ENCODE measurements at regions of chr20 and their contacts with region 1.

Region 1: DNA sequence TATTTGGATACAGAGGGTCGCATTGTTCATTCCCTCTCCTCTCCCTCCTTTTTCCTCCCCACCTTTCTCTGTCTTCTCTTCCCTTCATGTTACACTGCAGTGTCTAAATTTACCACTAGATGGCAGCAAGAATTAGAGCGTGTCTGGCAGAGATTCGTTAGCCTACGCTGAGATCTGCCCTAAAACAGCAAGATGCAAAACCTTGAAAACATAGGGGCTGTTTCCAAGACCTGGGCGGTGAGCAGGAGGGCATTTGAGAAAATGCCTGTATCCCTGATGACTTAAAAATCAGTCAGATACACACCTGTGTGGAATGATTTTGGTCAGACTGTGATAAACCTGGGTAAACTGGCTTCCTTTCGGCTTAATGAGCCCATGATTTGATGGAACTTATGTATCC is 101.5 kb upstream of the ISM1 start:
- DNase-seq: peak; percentile 11
- H3K4me3 ChIP-seq: no peak overlapping the region
- H3K27ac ChIP-seq: no peak overlapping the region
- H3K4me1 ChIP-seq: no peaks in the 10 kb centered on the region
- H3K27me3 ChIP-seq: no peaks in the 10 kb centered on the region
- CTCF ChIP-seq: peak; percentile 82 to 90 (median 87)
- EP300 ChIP-seq: no peak
- POLR2A ChIP-seq: no peak

Region 2: DNA sequence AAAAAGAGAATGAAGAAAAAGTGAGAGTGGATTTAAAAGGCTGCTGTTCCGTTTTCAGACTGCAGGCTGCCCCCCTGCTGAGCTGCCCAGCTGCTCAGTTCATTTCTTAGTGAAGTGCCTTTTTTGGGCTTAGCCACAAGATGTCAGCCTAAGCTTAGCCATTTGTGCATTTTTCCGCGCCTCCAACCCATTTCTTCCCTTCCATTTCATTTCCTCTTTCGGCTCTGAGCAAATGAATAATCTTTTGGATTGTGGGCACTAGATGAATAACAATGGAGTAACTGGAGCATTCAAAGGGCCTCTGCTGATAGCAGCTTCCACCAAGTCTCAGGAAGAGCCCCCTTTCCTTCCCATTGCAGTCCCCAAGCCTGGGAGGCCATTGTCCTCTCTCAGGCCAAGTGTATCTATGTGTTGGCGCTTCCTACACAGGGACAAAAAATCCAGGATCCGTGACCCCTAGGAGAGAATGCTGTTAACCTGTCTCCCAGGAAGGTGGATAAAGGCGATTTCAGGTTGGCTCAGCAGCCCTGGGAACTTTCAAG is 194.3 kb before region 1 on chr20:
- in situ Hi-C with region 1: no loop called
- intact Hi-C with region 1: loop called (anchors 5 kb)
- DNase-seq: peak; percentile 44
- H3K4me3 ChIP-seq: no peak overlapping the region
- H3K27ac ChIP-seq: no peak overlapping the region
- H3K4me1 ChIP-seq: peaks cover 0 to 9% (median 0%) of the 10 kb centered on the region in 4 donors
- H3K27me3 ChIP-seq: no peaks in the 10 kb centered on the region
- CTCF ChIP-seq: peak; percentile 70 to 91 (median 73)
- EP300 ChIP-seq: no peak
- POLR2A ChIP-seq: no peak

Region 3: DNA sequence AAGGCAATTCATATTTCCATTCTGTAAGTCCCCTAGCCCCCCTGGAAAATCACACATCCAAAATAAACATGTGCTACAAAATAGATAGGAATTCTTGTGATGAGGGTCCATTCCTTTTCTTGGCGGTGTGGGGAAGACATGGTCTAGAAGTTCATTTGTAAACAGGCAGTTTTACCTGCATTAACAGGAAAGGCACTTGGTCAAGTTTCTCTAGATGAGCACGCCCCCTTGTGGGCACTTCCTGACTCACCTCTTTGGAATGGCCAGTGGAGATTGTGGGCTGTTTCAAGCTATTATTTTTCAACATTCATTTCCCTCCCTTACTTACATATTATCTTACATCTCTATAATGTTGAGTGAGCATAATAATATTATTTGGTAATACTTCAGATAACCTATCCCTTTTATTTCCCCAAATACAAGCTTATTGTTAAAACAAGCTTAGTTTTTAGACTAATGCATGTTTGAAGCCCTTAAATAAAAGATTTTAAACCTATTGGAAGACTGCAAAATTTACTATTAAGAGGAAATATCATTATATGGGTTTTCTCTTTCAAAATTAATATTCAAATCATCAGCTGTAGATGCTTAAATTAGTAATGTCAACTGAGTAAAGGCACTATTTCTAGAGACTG is 427.0 kb after region 1 on chr20:
- in situ Hi-C with region 1: loop called in 3 of 4 experiments (anchors 5 to 25 kb)
- intact Hi-C with region 1: loop called (anchors 5 kb)
- DNase-seq: peak; percentile 84
- H3K4me3 ChIP-seq: no peak overlapping the region
- H3K27ac ChIP-seq: no peak overlapping the region
- H3K4me1 ChIP-seq: peaks cover 0 to 11% (median 8%) of the 10 kb centered on the region in 4 donors
- H3K27me3 ChIP-seq: no peaks in the 10 kb centered on the region
- CTCF ChIP-seq: peak; percentile 74 to 86 (median 77)
- EP300 ChIP-seq: no peak
- POLR2A ChIP-seq: no peak

Region 4: GRCh38 chr20:13554706-13555105 is 435.1 kb after region 1 on chr20:
- in situ Hi-C with region 1: loop called in 2 of 4 experiments (anchors 25 kb)
- intact Hi-C with region 1: loop called (anchors 5 kb)
- DNase-seq: no peak
- H3K4me3 ChIP-seq: no peak overlapping the region
- H3K27ac ChIP-seq: no peak overlapping the region
- H3K4me1 ChIP-seq: no peaks in the 10 kb centered on the region
- H3K27me3 ChIP-seq: no peaks in the 10 kb centered on the region
- CTCF ChIP-seq: no peak
- EP300 ChIP-seq: no peak
- POLR2A ChIP-seq: no peak

Region 5: GRCh38 chr20:13765299-13765698 is 645.7 kb after region 1 on chr20:
- in situ Hi-C with region 1: loop called (anchors 25 kb)
- intact Hi-C with region 1: loop called (anchors 10 kb)
- DNase-seq: no peak
- H3K4me3 ChIP-seq: no peak overlapping the region
- H3K27ac ChIP-seq: no peak overlapping the region
- H3K4me1 ChIP-seq: no peaks in the 10 kb centered on the region
- H3K27me3 ChIP-seq: no peaks in the 10 kb centered on the region
- CTCF ChIP-seq: no peak
- EP300 ChIP-seq: no peak
- POLR2A ChIP-seq: no peak

Region 6: GRCh38 chr20:13771853-13772453 is 652.4 kb after region 1 on chr20:
- in situ Hi-C with region 1: loop called (anchors 25 kb)
- intact Hi-C with region 1: loop called (anchors 10 kb)
- DNase-seq: no peak
- H3K4me3 ChIP-seq: no peak overlapping the region
- H3K27ac ChIP-seq: no peak overlapping the region
- H3K4me1 ChIP-seq: no peaks in the 10 kb centered on the region
- H3K27me3 ChIP-seq: no peaks in the 10 kb centered on the region
- CTCF ChIP-seq: peak in 4 of 5 experiments; percentile 44 to 56 (median 49)
- EP300 ChIP-seq: no peak
- POLR2A ChIP-seq: no peak

Measured in transverse colon (tissue), 4 donors.